IMR-90 (cell line): ENCODE measurements at regions of chr2 and their contacts with region 1.

Region 1: GRCh38 chr2:150487537-150488429 is at the start of gene RND3:
- DNase-seq: peak; percentile 99
- ATAC-seq: peak; percentile 61
- H3K4me3 ChIP-seq: peak within 1 kb of the TSS; percentile 92
- H3K27ac ChIP-seq: peak within 1 kb of the TSS; percentile 100
- H3K4me1 ChIP-seq: 0 out of 2 replicates have a peak, but pooled peaks cover 2% of the 10 kb centered on the region
- H3K27me3 ChIP-seq: no peaks in the 10 kb centered on the region
- CTCF ChIP-seq: peak; percentile 93
- POLR2A ChIP-seq: peak; percentile 100
- RAD21 ChIP-seq: peak; percentile 86
- total RNA-seq, gene RND3: 331 and 449 TPM in 2 replicates

Region 2: DNA sequence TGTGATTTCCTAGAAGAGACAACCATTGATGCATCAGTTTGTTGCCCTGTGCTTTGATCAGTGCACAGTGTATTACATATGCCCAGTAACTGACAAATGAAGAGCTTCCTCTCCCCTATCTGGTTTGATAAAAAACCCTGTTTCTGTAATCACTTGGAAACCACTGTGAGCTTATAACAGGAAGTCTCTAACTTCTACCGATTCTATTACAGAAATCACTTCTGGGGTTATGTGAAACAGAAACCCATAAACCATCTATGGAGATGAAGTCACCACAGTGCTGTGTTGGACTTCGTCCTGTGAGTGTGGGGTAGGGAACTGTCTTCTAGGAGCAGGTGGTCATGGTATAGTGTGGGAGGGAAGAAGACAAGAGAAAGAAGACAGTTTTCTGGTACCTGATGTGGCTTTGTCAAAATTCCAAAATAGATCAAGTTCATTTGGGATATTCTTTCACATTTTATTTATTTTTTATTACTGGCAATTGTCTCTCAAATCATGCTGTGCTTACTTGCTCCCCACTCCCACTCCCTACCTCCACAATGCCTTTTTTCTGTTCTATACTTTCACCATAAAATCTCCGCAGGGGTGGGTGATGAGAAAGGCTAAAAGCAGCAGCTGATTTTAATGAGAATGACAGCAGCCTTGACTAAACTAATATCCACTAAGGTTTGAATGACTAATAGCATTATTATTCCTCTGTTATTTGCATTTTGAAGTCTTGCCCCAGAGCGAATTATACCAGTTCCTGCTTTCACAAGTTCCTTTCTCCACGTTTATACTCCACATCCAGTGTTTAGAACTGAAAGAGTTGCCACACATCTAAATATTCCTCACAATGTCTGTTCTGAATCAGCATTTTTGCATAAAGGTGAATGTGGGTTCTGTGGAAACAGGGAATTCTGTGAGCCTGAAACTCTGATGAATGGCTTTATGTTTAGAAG is 41.3 kb after region 1 on chr2:
- CTCF ChIA-PET with region 1: interaction called, 3 read pairs
- POLR2A ChIA-PET with region 1: interaction called, 3 read pairs
- dilution Hi-C with region 1: no loop called
- in situ Hi-C with region 1: loop called (anchors 5 kb)
- intact Hi-C with region 1: loop called (anchors 1 kb)
- DNase-seq: peak; percentile 79
- ATAC-seq: peak; percentile 47
- H3K4me3 ChIP-seq: peak overlapping the region; percentile 5; the same call in 1 of the 2 replicates
- H3K27ac ChIP-seq: peak overlapping the region; percentile 90
- H3K4me1 ChIP-seq: peaks cover 29% of the 10 kb centered on the region
- H3K27me3 ChIP-seq: no peaks in the 10 kb centered on the region
- CTCF ChIP-seq: no peak
- POLR2A ChIP-seq: no peak
- RAD21 ChIP-seq: no peak

Region 3: GRCh38 chr2:150595803-150596470 is 108.2 kb after region 1 on chr2:
- CTCF ChIA-PET with region 1: no interaction called
- POLR2A ChIA-PET with region 1: interaction called, 12 read pairs
- dilution Hi-C with region 1: no loop called
- in situ Hi-C with region 1: loop called (anchors 5 kb)
- intact Hi-C with region 1: loop called (anchors 2 kb)
- DNase-seq: peak; percentile 68
- ATAC-seq: peak; percentile 64
- H3K4me3 ChIP-seq: no peak overlapping the region
- H3K27ac ChIP-seq: peak overlapping the region; percentile 73
- H3K4me1 ChIP-seq: peaks cover 17% of the 10 kb centered on the region
- H3K27me3 ChIP-seq: no peaks in the 10 kb centered on the region
- CTCF ChIP-seq: no peak
- POLR2A ChIP-seq: no peak
- RAD21 ChIP-seq: no peak

Region 4: GRCh38 chr2:150610671-150611279 is 123.0 kb after region 1 on chr2:
- CTCF ChIA-PET with region 1: interaction called, 3 read pairs
- POLR2A ChIA-PET with region 1: interaction called, 8 read pairs
- dilution Hi-C with region 1: no loop called
- in situ Hi-C with region 1: no loop called
- intact Hi-C with region 1: loop called (anchors 1 kb)
- DNase-seq: peak; percentile 69
- ATAC-seq: peak; percentile 16; the same call in 1 of the 2 replicates
- H3K4me3 ChIP-seq: no peak overlapping the region
- H3K27ac ChIP-seq: peak overlapping the region; percentile 49; the same call in 1 of the 2 replicates
- H3K4me1 ChIP-seq: peaks cover 13% of the 10 kb centered on the region
- H3K27me3 ChIP-seq: no peaks in the 10 kb centered on the region
- CTCF ChIP-seq: peak; percentile 65
- POLR2A ChIP-seq: no peak
- RAD21 ChIP-seq: peak; percentile 87

Region 5: DNA sequence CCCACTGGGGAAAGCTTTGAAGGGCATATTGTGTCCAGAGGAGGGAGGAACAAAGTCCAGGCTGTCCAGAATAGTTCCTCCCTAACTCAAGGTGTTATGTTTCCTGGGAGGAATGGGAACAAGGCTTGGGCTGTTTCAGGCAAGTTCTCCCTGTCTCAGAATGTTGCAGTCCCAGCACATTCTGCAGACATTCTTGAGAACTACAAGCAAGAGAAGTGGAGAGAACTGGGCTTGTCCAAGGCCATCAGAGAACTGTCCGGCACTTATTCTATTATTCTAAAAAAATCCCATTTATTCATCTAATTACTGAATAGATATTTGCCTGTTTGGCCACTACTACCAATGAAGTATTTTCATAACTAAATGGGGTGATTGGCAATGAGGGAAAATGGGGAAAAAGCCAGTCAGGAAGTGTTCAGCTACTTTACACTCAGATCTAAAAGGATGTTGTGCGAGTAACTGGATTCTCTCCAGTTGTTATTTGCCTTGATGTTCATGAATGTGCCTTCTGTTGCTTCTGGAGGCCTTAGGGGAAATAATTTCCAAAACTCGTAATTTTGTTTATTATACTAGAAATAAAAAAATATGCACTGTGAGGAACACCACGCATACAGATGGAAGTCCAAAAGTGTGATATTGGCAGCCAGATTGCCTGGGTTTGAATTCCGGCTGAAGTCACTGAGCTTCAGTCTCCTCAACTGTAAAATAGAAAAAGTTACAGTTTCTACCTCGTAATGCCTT is 299.7 kb after region 1 on chr2:
- CTCF ChIA-PET with region 1: no interaction called
- POLR2A ChIA-PET with region 1: no interaction called
- dilution Hi-C with region 1: no loop called
- in situ Hi-C with region 1: no loop called
- intact Hi-C with region 1: loop called (anchors 5 kb)
- DNase-seq: no peak
- ATAC-seq: no peak; the same call in 1 of the 2 replicates
- H3K4me3 ChIP-seq: no peak overlapping the region
- H3K27ac ChIP-seq: no peak overlapping the region; the same call in 1 of the 2 replicates
- H3K4me1 ChIP-seq: peaks cover 3% of the 10 kb centered on the region; the same call in 1 of the 2 replicates
- H3K27me3 ChIP-seq: no peaks in the 10 kb centered on the region
- CTCF ChIP-seq: no peak
- POLR2A ChIP-seq: no peak
- RAD21 ChIP-seq: no peak

Region 6: DNA sequence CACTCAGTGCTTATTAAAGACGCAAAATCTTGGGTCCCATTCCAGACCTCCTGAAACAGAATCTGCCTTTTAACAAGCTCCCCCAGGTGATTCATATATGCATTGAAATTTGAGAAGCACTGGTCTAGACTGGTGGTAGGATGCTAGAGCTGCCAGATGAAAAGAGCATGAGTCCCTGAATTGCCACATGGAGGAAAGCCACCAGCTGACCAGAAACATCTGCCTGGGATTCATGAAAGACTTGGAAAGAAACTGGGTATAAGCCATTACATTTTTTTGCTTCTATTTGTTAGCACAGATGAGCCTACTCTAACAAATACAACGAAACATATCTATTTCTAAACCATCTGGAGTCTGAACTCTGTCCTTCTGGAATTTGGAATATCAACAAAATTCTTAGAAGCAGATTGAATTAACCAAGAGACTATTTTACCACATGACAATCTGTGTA is 545.0 kb after region 1 on chr2:
- CTCF ChIA-PET with region 1: no interaction called
- POLR2A ChIA-PET with region 1: no interaction called
- dilution Hi-C with region 1: no loop called
- in situ Hi-C with region 1: loop called (anchors 10 kb)
- intact Hi-C with region 1: loop called (anchors 5 kb)
- DNase-seq: peak; percentile 100
- ATAC-seq: peak; percentile 85
- H3K4me3 ChIP-seq: no peak overlapping the region
- H3K27ac ChIP-seq: peak overlapping the region; percentile 71; the same call in 1 of the 2 replicates
- H3K4me1 ChIP-seq: peaks cover 5% of the 10 kb centered on the region
- H3K27me3 ChIP-seq: no peaks in the 10 kb centered on the region
- CTCF ChIP-seq: no peak
- POLR2A ChIP-seq: no peak
- RAD21 ChIP-seq: no peak

Region 7: GRCh38 chr2:151161821-151162551 is 674.2 kb after region 1 on chr2:
- CTCF ChIA-PET with region 1: no interaction called
- POLR2A ChIA-PET with region 1: no interaction called
- dilution Hi-C with region 1: no loop called
- in situ Hi-C with region 1: no loop called
- intact Hi-C with region 1: loop called (anchors 1 kb)
- DNase-seq: peak; percentile 70
- ATAC-seq: peak; percentile 84
- H3K4me3 ChIP-seq: no peak overlapping the region
- H3K27ac ChIP-seq: no peak overlapping the region
- H3K4me1 ChIP-seq: no peaks in the 10 kb centered on the region; the same call in 1 of the 2 replicates
- H3K27me3 ChIP-seq: no peaks in the 10 kb centered on the region; the same call in 1 of the 2 replicates
- CTCF ChIP-seq: peak; percentile 53
- POLR2A ChIP-seq: no peak
- RAD21 ChIP-seq: peak; percentile 56